ENCODE measurements at regions of chr1 and their contacts with region 1.

Region 1: DNA sequence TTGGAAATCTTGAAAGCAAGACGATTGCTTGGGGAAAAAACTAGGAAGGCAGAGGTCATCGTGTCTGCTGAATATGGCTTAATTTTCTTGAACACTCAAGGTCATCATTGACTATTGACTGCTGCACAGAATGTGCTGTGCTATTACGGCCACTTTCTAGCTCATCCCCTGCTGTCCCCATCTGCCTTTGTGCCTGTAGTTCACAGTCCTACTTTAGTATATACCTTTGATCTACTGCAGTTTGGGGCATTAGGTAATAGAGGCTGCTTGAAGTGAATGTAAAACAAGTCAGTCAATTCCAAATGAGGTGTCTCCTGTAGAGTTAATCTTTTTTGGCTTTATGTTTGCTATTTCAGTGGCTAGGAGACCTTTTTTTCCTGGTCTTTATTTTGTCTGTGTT is 8.3 kb downstream of the RAB4A start:
- DNase-seq: no peak
- H3K4me3 ChIP-seq: no peak overlapping the region
- H3K27ac ChIP-seq: no peak overlapping the region
- H3K4me1 ChIP-seq: peaks cover 10% of the 10 kb centered on the region
- H3K27me3 ChIP-seq: no peaks in the 10 kb centered on the region
- CTCF ChIP-seq: no peak

Region 2: GRCh38 chr1:229341774-229342655 is 62.8 kb after region 1 on chr1:
- intact Hi-C with region 1: loop called (anchors 5 kb)
- DNase-seq: peak; percentile 93
- H3K4me3 ChIP-seq: peak overlapping the region; percentile 82
- H3K27ac ChIP-seq: peak overlapping the region; percentile 84
- H3K4me1 ChIP-seq: no peaks in the 10 kb centered on the region
- H3K27me3 ChIP-seq: no peaks in the 10 kb centered on the region
- CTCF ChIP-seq: no peak

Region 3: GRCh38 chr1:229479660-229480399 is 200.6 kb after region 1 on chr1:
- intact Hi-C with region 1: no loop called
- DNase-seq: no peak
- H3K4me3 ChIP-seq: no peak overlapping the region
- H3K27ac ChIP-seq: no peak overlapping the region
- H3K4me1 ChIP-seq: no peaks in the 10 kb centered on the region
- H3K27me3 ChIP-seq: no peaks in the 10 kb centered on the region
- CTCF ChIP-seq: no peak